OCI-LY7 (cell line): ENCODE measurements at regions of chr11 and their contacts with region 1.

Region 1: GRCh38 chr11:47950396-47950795 is 30.0 kb upstream of the PTPRJ start:
- DNase-seq: peak; percentile 91
- H3K4me3 ChIP-seq: no peak overlapping the region
- H3K27ac ChIP-seq: peak overlapping the region; percentile 46
- H3K4me1 ChIP-seq: peaks cover 26% of the 10 kb centered on the region
- CTCF ChIP-seq: no peak

Region 2: DNA sequence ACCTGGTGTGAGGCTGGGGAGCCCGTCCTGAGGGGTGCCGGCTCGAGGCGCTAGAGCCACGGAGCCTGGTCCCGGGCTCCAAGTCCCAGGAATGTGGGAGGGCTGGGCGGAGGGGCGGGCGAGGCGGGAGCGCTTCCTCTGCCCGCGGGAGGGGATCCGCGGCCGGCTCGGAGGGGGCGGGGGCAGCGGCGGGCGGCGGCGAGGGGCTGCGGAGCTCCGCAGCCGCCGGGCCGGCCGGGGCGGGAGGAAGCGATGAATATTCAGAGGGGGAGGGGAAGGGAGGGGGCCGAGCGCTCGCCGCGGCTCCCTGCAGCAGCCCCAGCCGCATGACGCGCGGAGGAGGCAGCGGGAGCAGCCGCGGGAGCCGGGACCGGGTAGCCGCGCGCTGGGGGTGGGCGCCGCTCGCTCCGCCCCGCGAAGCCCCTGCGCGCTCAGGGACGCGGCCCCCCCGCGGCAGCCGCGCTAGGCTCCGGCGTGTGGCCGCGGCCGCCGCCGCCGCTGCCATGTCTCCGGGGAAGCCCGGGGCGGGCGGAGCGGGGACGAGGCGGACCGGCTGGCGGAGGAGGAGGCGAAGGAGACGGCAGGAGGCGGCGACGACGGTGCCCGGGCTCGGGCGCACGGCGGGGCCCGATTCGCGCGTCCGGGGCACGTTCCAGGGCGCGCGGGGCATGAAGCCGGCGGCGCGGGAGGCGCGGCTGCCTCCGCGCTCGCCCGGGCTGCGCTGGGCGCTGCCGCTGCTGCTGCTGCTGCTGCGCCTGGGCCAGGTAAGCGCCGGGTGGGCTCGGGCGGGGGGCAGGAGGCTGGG is 30.1 kb after region 1 on chr11 and contains the start of gene PTPRJ:
- CTCF ChIA-PET with region 1: no interaction called
- POLR2A ChIA-PET with region 1: interaction called, 4 read pairs
- intact Hi-C with region 1: loop called (anchors 2 kb)
- DNase-seq: peak; percentile 65
- H3K4me3 ChIP-seq: peak within 1 kb of the TSS; percentile 82
- H3K27ac ChIP-seq: no peak within 1 kb of the TSS
- H3K4me1 ChIP-seq: peaks cover 38% of the 10 kb centered on the region
- CTCF ChIP-seq: no peak
- total RNA-seq, gene PTPRJ: 4.5 and 5.4 TPM in 2 replicates

Region 3: DNA sequence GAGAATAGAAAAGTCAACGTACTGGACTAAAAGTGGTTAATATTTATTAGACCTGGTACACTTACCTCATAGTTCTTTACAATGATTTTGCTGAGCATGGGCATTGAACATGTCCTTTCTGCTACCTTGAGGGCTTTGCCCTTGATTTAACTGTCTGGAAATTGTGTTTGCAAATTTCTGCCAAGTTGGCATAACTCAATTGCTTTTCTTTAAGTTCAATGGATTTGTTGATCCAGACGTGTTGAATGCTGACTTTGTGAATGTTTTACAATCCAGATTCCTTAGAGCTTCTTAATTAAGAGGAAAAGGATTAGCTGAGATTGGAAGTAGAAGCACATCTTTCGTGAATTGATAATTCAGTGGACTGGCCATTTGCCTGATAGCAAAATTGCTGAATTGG is 287.3 kb after region 1 on chr11:
- CTCF ChIA-PET with region 1: no interaction called
- POLR2A ChIA-PET with region 1: no interaction called
- intact Hi-C with region 1: no loop called
- DNase-seq: no peak
- H3K4me3 ChIP-seq: no peak overlapping the region
- H3K27ac ChIP-seq: no peak overlapping the region
- H3K4me1 ChIP-seq: no peaks in the 10 kb centered on the region
- CTCF ChIP-seq: no peak